AG04450 (cell line): ENCODE measurements at regions of chr2 and their contacts with region 1.

Region 1: GRCh38 chr2:37877457-37878315 is 47.4 kb upstream of the RMDN2 start:
- DNase-seq: no peak
- H3K4me3 ChIP-seq: no peak overlapping the region
- H3K27ac ChIP-seq: no peak overlapping the region
- H3K27me3 ChIP-seq: no peaks in the 10 kb centered on the region
- CTCF ChIP-seq: peak; percentile 65

Region 2: GRCh38 chr2:37343537-37344434 is 533.9 kb before region 1 on chr2:
- CTCF ChIA-PET with region 1: interaction called, 12 read pairs
- POLR2A ChIA-PET with region 1: no interaction called
- DNase-seq: no peak
- H3K4me3 ChIP-seq: peak overlapping the region; percentile 62
- H3K27ac ChIP-seq: no peak overlapping the region
- H3K27me3 ChIP-seq: no peaks in the 10 kb centered on the region
- CTCF ChIP-seq: peak; percentile 57

Region 3: DNA sequence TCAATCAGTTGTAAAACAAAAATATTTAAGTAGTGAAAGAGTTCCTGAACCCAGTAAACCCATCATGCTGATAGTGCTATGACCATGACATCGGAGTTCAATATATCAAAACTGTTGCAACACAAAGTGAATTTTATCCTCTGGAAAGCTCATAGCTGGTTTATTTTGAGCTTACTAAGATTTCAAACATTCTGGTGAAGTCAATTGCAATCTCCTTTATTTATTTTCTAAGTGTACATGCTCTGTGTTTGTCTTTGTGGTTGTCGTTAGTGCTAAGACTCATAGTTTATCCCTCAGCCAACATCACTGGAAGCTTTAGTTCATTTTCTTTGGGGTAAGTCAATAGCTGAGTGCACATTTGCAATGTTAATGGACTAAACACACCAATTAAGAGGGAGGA is 441.4 kb before region 1 on chr2:
- CTCF ChIA-PET with region 1: interaction called, 12 read pairs
- POLR2A ChIA-PET with region 1: no interaction called
- DNase-seq: no peak
- H3K4me3 ChIP-seq: no peak overlapping the region
- H3K27ac ChIP-seq: no peak overlapping the region
- H3K27me3 ChIP-seq: no peaks in the 10 kb centered on the region
- CTCF ChIP-seq: no peak

Region 4: GRCh38 chr2:37648331-37649011 is 229.2 kb before region 1 on chr2:
- CTCF ChIA-PET with region 1: interaction called, 28 read pairs
- POLR2A ChIA-PET with region 1: no interaction called
- DNase-seq: no peak
- H3K4me3 ChIP-seq: no peak overlapping the region
- H3K27ac ChIP-seq: peak overlapping the region; percentile 41
- H3K27me3 ChIP-seq: no peaks in the 10 kb centered on the region
- CTCF ChIP-seq: peak; percentile 9; the same call in 1 of the 2 replicates

Region 5: DNA sequence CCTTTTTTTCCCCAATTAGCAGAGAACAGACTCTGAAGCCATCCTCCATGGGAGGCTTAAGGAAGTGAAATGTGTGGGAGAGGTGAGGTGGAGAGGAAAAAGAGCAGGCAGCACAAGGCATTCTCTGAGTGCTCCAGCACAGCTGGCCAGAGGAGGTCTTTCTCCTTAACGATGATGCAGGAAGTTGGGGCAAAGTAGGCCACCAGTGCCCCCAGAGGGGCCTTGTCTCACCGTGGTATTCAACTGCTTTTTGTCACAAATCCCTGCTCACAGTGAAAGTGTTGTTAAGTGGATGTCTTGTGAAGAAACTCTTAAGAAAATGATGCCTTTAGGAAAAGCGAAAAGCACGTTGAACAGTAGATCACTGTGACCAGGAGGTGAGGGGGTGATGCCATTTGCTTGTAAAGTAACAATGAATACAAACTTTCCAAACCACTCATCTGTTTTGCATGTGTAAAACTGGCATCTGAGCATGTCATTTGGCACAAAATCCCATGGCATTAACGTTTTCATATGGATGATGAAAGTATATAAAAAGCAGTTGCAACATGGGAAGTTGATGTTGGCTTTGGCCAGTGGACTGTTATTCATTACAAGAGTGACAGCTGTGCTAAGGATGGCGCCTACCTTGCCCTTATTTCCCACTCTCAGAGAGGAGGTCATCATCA is 157.0 kb before region 1 on chr2:
- CTCF ChIA-PET with region 1: no interaction called
- POLR2A ChIA-PET with region 1: no interaction called
- DNase-seq: no peak
- H3K4me3 ChIP-seq: no peak overlapping the region
- H3K27ac ChIP-seq: no peak overlapping the region
- H3K27me3 ChIP-seq: no peaks in the 10 kb centered on the region
- CTCF ChIP-seq: no peak

Region 6: GRCh38 chr2:37819186-37819585 is 58.5 kb before region 1 on chr2:
- CTCF ChIA-PET with region 1: interaction called, 12 read pairs
- POLR2A ChIA-PET with region 1: no interaction called
- DNase-seq: peak; percentile 79
- H3K4me3 ChIP-seq: no peak overlapping the region
- H3K27ac ChIP-seq: peak overlapping the region; percentile 48
- H3K27me3 ChIP-seq: no peaks in the 10 kb centered on the region
- CTCF ChIP-seq: no peak

Region 7: GRCh38 chr2:37890893-37891495 is 13.3 kb after region 1 on chr2:
- CTCF ChIA-PET with region 1: interaction called, 40 read pairs
- POLR2A ChIA-PET with region 1: no interaction called
- DNase-seq: no peak
- H3K4me3 ChIP-seq: no peak overlapping the region
- H3K27ac ChIP-seq: no peak overlapping the region
- H3K27me3 ChIP-seq: peaks cover under 1% of the 10 kb centered on the region
- CTCF ChIP-seq: peak; percentile 91

Region 8: DNA sequence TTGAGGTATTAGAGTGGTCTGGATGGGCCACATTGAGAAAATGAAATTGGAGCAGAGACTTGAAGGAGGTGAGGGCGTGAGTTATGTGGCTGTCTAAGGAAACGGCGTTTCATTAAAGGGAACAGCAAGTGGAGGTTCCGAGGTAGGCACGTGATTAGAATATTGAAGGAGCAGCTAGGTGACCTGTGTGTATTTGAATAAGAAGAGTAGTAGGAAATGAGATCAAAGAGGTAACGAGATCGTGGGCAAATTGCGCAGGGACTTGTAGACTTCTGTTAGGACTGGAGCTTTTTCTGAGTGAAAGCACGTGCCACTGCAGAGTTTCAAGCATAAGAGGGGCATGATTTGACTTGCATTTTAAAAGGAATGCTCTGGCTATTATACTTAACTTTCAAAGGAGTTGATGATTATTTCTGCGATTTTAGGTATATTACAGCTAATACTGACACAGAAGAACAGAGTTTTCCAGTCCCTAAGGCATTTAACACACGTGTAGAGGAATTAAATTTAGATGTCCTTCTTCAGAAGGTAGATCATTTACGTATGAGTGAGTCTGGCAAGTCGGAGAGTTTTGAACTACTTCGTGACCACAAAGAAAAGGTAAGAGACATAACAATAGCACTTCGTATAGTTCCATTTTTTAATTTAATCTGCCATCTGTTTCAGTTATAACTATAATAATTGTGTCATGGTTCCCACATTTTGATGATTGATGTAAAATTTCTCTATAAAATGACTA is 96.1 kb after region 1 on chr2:
- CTCF ChIA-PET with region 1: no interaction called
- POLR2A ChIA-PET with region 1: no interaction called
- DNase-seq: no peak
- H3K4me3 ChIP-seq: no peak overlapping the region
- H3K27ac ChIP-seq: no peak overlapping the region
- H3K27me3 ChIP-seq: no peaks in the 10 kb centered on the region
- CTCF ChIP-seq: no peak